PC-3 (cell line): ENCODE measurements at regions of chr11 and their contacts with region 1.

Region 1: DNA sequence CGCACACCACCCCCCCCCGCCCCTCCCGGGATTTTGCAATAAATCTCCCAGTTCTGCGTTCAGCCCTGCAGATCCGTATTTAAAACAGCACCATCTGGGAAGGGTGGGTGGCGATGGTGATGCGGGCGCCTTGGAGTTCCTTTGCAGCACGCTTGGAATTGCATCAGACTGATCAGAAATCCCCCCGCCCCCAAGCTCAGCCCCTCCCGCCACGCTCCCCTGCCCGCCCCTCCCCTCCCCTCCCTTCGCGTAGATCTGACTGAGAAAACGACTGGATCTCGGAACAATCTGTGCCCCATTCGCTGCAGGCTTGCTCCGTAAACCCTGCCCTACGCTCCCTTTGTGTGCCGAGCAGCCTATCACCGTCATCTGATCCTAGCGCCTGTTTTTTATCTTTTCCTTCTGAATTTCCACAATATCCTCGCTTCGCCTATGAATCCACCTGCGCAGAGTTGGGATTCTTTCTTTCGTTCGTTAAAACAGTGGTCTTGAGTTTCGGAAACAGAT is 18.1 kb upstream of the BDNF start:
- DNase-seq: peak; percentile 79
- ATAC-seq: peak; percentile 86
- H3K4me3 ChIP-seq: peak overlapping the region; percentile 97
- H3K27ac ChIP-seq: peak overlapping the region; percentile 69
- H3K4me1 ChIP-seq: peaks cover 6% of the 10 kb centered on the region; the same call in 1 of the 2 replicates
- H3K27me3 ChIP-seq: no peaks in the 10 kb centered on the region
- CTCF ChIP-seq: no peak

Region 2: GRCh38 chr11:27770576-27770975 is 52.2 kb after region 1 on chr11:
- CTCF ChIA-PET with region 1: interaction called, 7 read pairs
- POLR2A ChIA-PET with region 1: no interaction called
- intact Hi-C with region 1: loop called (anchors 2 kb)
- DNase-seq: peak; percentile 89
- ATAC-seq: peak; percentile 97
- H3K4me3 ChIP-seq: no peak overlapping the region
- H3K27ac ChIP-seq: peak overlapping the region; percentile 29
- H3K4me1 ChIP-seq: peaks cover 20% of the 10 kb centered on the region
- H3K27me3 ChIP-seq: no peaks in the 10 kb centered on the region
- CTCF ChIP-seq: no peak

Region 3: DNA sequence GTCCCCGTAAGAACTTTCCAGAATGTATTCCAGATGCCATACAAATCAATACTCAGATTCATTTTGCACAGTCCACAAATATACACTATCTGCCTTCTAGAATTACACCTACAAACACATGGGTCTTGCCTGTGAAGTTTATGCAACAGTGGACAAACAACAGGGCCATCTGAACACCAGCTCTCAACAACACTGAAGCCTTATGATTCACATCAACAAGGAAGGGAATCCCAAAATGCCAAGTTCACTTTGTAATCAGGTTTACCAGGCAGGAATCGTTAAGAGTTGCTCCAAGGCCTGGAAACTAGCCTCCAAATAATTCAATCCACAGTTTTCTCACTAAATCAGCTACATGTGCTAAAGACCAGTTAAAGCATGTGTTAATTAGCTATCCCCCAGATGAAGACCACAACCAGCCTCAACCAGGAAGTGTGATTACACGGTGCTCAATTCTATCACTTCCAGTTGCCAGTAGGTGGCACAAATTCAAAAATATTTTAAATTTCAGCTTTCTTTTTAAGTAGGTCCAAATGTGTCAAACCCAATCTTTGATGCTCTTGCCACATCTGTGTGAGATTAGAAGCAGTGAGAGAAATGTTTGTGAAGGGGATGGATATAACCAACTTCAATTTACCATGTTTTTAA is 120.9 kb after region 1 on chr11:
- CTCF ChIA-PET with region 1: no interaction called
- POLR2A ChIA-PET with region 1: no interaction called
- intact Hi-C with region 1: loop called (anchors 5 kb)
- DNase-seq: peak; percentile 52
- ATAC-seq: no peak; the same call in 1 of the 2 replicates
- H3K4me3 ChIP-seq: no peak overlapping the region
- H3K27ac ChIP-seq: no peak overlapping the region
- H3K4me1 ChIP-seq: no peaks in the 10 kb centered on the region
- H3K27me3 ChIP-seq: no peaks in the 10 kb centered on the region
- CTCF ChIP-seq: peak; percentile 75

Region 4: GRCh38 chr11:27904358-27905055 is 186.1 kb after region 1 on chr11:
- CTCF ChIA-PET with region 1: no interaction called
- POLR2A ChIA-PET with region 1: no interaction called
- intact Hi-C with region 1: loop called (anchors 1 kb)
- DNase-seq: peak; percentile 85
- ATAC-seq: peak; percentile 78
- H3K4me3 ChIP-seq: peak overlapping the region; percentile 39; the same call in 1 of the 2 replicates
- H3K27ac ChIP-seq: peak overlapping the region; percentile 97
- H3K4me1 ChIP-seq: peaks cover 53% of the 10 kb centered on the region
- H3K27me3 ChIP-seq: no peaks in the 10 kb centered on the region
- CTCF ChIP-seq: no peak

Region 5: DNA sequence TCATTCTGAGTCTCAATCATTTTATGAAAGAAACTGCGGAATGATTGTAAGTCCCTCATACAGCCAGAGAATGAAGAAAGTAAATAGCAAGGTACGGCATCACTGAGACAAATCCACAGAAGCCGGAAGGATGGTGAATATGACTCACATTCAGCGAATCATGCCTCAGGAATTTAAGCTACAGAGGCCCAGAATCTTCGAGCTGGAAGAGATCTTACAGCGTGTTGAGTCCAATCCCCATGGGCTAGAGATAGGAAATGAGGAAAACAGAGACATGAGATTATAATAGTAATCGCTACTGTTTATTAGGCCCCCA is 216.4 kb after region 1 on chr11:
- CTCF ChIA-PET with region 1: interaction called, 3 read pairs
- POLR2A ChIA-PET with region 1: interaction called, 7 read pairs
- intact Hi-C with region 1: loop called (anchors 1 kb)
- DNase-seq: peak; percentile 95
- ATAC-seq: peak; percentile 89
- H3K4me3 ChIP-seq: peak overlapping the region; percentile 33; the same call in 1 of the 2 replicates
- H3K27ac ChIP-seq: peak overlapping the region; percentile 95
- H3K4me1 ChIP-seq: peaks cover 29% of the 10 kb centered on the region
- H3K27me3 ChIP-seq: no peaks in the 10 kb centered on the region
- CTCF ChIP-seq: no peak

Region 6: DNA sequence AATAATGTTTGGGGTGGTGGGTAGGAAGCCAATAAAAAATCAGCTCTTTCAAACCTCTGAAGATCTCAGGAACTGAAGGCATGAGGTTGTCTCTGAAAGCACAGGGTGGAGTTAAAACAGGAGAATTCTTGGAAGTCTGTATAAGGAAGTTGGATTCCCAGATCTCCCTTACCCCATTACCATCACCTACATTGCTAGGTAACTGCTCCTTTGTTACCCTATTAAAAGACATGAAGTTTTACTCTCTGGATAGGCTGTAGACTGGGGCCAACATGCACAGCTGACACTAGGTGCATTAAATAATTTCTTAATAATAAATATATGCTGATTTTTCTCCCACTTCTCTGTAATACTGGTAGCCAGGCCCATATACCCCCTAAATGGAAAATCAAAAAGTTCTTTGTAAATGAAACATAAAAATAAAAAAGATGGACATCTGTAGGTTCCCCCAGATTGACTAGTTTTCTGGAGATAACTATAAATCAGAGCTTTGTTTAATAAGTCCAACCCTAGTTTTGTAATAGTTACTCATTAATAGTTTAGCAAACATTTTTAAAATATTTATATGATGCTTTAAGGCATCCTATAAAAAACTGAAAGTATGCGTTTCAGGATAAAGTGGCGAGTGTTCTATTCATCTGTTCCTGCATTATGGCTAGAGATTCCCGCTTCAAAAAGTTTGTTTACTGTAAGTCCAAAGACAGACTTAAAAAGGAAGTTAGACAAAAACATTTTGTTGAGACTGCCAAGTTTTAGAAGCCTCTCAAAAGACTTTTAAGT is 325.7 kb after region 1 on chr11:
- CTCF ChIA-PET with region 1: interaction called, 3 read pairs
- POLR2A ChIA-PET with region 1: interaction called, 4 read pairs
- intact Hi-C with region 1: loop called (anchors 5 kb)
- DNase-seq: peak; percentile 61
- ATAC-seq: peak; percentile 76
- H3K4me3 ChIP-seq: no peak overlapping the region; the same call in 1 of the 2 replicates
- H3K27ac ChIP-seq: peak overlapping the region; percentile 43
- H3K4me1 ChIP-seq: peaks cover 23% of the 10 kb centered on the region
- H3K27me3 ChIP-seq: no peaks in the 10 kb centered on the region
- CTCF ChIP-seq: no peak

Region 7: DNA sequence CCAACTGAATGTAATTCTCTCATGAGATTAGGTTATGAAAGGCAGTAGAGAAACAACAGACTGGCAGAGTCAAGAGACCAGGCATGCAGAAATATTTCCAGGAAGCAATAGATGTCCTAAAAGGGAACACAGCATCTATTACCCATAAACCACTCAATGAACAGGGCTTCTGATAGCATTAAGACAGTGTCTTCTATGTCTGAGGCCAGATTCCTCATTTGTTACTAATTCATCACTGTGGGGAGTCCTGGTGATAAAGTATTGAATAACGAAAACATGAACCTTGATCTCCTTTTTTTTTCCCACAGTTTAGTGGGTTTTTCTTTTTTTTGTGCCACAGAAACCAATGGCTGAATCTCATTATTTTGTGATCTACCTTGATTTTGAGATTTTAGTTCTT is 728.8 kb after region 1 on chr11:
- CTCF ChIA-PET with region 1: no interaction called
- POLR2A ChIA-PET with region 1: no interaction called
- intact Hi-C with region 1: no loop called
- DNase-seq: no peak
- ATAC-seq: no peak
- H3K4me3 ChIP-seq: no peak overlapping the region
- H3K27ac ChIP-seq: no peak overlapping the region
- H3K4me1 ChIP-seq: no peaks in the 10 kb centered on the region
- H3K27me3 ChIP-seq: no peaks in the 10 kb centered on the region
- CTCF ChIP-seq: no peak

Region 8: GRCh38 chr11:28529540-28530410 is 811.4 kb after region 1 on chr11:
- CTCF ChIA-PET with region 1: interaction called, 3 read pairs
- POLR2A ChIA-PET with region 1: no interaction called
- intact Hi-C with region 1: loop called (anchors 5 kb)
- DNase-seq: peak; percentile 83
- ATAC-seq: peak; percentile 65
- H3K4me3 ChIP-seq: no peak overlapping the region
- H3K27ac ChIP-seq: no peak overlapping the region
- H3K4me1 ChIP-seq: peaks cover 7% of the 10 kb centered on the region
- H3K27me3 ChIP-seq: no peaks in the 10 kb centered on the region
- CTCF ChIP-seq: peak; percentile 68